A673 (cell line): ENCODE measurements at regions of chr19 and their contacts with region 1.

Region 1: GRCh38 chr19:12994701-12995595 is at the start of gene NFIX:
- DNase-seq: peak; percentile 76
- H3K4me3 ChIP-seq: peak within 1 kb of the TSS; percentile 79
- H3K27ac ChIP-seq: peak within 1 kb of the TSS; percentile 86
- H3K4me1 ChIP-seq: peaks cover 4% of the 10 kb centered on the region
- H3K27me3 ChIP-seq: no peaks in the 10 kb centered on the region
- CTCF ChIP-seq: no peak
- total RNA-seq, gene NFIX: 69.7 and 77.9 TPM in 2 replicates

Region 2: GRCh38 chr19:13093407-13094105 is 98.6 kb after region 1 on chr19:
- CTCF ChIA-PET with region 1: interaction called, 4 read pairs
- POLR2A ChIA-PET with region 1: interaction called, 12 read pairs
- intact Hi-C with region 1: no loop called
- DNase-seq: peak; percentile 93
- H3K4me3 ChIP-seq: no peak overlapping the region
- H3K27ac ChIP-seq: peak overlapping the region; percentile 35
- H3K4me1 ChIP-seq: peaks cover 44% of the 10 kb centered on the region
- H3K27me3 ChIP-seq: no peaks in the 10 kb centered on the region
- CTCF ChIP-seq: peak; percentile 96

Region 3: GRCh38 chr19:13104360-13104847 is 109.5 kb after region 1 on chr19:
- CTCF ChIA-PET with region 1: no interaction called
- POLR2A ChIA-PET with region 1: interaction called, 24 read pairs
- intact Hi-C with region 1: no loop called
- DNase-seq: no peak
- H3K4me3 ChIP-seq: no peak overlapping the region
- H3K27ac ChIP-seq: no peak overlapping the region
- H3K4me1 ChIP-seq: no peaks in the 10 kb centered on the region
- H3K27me3 ChIP-seq: no peaks in the 10 kb centered on the region
- CTCF ChIP-seq: peak; percentile 81